ENCODE measurements at regions of chr11 and their contacts with region 1.

Region 1: GRCh38 chr11:123560006-123560405 is 94.4 kb downstream of the SCN3B start:
- DNase-seq: peak; percentile 61
- H3K4me3 Mint-ChIP-seq: peak overlapping the region; percentile 57
- H3K27ac Mint-ChIP-seq: peak overlapping the region; percentile 67
- H3K4me1 Mint-ChIP-seq: peaks cover 21% of the 10 kb centered on the region
- H3K27me3 Mint-ChIP-seq: no peaks in the 10 kb centered on the region

Region 2: DNA sequence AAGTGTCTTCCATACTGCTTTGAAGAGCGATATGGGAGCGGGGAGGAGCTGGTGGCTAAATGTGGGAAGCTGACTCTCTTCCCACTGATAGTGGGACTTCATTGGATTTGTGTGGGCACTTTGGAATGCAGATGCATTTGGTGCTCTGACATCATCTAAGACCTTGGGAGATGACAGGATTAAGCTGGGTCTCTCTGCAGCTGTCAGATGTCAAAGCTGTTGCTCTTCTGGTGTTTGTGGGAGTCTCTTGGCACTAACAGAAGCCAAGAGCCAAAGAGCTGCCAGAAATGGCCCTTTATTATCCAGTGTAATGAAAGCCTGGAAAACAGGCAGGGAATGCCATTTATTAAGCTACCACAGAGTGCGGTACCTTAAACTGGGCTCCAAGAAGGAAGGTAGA is 109.4 kb before region 1 on chr11:
- CTCF ChIA-PET with region 1: no interaction called
- POLR2A ChIA-PET with region 1: no interaction called
- DNase-seq: no peak
- H3K4me3 Mint-ChIP-seq: no peak overlapping the region
- H3K27ac Mint-ChIP-seq: peak overlapping the region; percentile 86
- H3K4me1 Mint-ChIP-seq: peaks cover 69% of the 10 kb centered on the region
- H3K27me3 Mint-ChIP-seq: no peaks in the 10 kb centered on the region

Region 3: GRCh38 chr11:123544631-123545375 is 15.2 kb before region 1 on chr11:
- CTCF ChIA-PET with region 1: interaction called, 11 read pairs
- POLR2A ChIA-PET with region 1: no interaction called
- DNase-seq: no peak
- H3K4me3 Mint-ChIP-seq: no peak overlapping the region
- H3K27ac Mint-ChIP-seq: no peak overlapping the region
- H3K4me1 Mint-ChIP-seq: peaks cover 13% of the 10 kb centered on the region
- H3K27me3 Mint-ChIP-seq: no peaks in the 10 kb centered on the region